Thyroid gland (tissue), 4 donors: ENCODE measurements at regions of chr6 and their contacts with region 1.

Region 1: DNA sequence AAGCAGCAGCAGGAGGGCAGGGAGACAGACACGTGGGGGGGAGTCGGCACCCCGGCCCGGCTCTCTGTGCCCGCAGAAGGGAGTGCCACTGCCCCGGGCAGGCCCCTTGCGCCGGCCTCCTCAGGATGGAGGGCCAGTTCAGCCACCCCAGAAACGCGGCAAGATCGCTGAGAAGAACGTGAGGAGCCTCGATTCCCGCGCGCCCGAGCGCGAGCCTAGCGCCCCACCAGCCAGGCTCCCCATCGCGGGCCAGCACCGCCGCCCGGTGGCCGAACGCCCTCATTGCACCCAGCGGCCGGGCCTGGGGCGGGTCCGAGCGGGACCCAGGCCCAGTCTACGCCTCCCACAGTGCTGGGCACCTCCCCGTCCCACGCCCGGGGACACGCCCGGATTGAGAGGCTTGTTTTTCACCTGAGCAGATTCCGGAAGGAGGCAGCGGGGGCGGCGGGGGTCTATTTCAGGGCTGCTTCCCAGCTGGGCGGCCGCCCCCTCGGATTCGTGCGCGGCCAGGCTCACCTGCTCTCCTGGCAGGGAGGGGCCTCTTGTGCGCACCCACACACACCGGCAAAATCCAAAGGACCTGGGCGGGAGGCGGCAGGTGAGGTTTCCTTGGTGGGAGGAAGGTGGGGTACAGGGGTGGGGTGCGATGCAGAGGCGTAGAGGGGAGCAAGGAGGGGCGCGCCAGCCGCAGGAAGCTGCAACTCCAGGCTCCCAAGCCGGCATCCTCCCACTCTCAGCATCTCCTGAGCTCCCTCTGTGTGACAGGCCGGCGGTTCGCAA is 9.0 kb upstream of the GRM4 start:
- DNase-seq: peak; percentile 49 to 53
- H3K4me3 ChIP-seq: no peak overlapping the region
- H3K27ac ChIP-seq: no peak overlapping the region
- H3K4me1 ChIP-seq: peaks cover 0 to 8% of the 10 kb centered on the region in 2 donors
- H3K27me3 ChIP-seq: peaks cover 5% of the 10 kb centered on the region
- CTCF ChIP-seq: peak; percentile 81 to 99 (median 97)
- POLR2A ChIP-seq: no peak

Region 2: DNA sequence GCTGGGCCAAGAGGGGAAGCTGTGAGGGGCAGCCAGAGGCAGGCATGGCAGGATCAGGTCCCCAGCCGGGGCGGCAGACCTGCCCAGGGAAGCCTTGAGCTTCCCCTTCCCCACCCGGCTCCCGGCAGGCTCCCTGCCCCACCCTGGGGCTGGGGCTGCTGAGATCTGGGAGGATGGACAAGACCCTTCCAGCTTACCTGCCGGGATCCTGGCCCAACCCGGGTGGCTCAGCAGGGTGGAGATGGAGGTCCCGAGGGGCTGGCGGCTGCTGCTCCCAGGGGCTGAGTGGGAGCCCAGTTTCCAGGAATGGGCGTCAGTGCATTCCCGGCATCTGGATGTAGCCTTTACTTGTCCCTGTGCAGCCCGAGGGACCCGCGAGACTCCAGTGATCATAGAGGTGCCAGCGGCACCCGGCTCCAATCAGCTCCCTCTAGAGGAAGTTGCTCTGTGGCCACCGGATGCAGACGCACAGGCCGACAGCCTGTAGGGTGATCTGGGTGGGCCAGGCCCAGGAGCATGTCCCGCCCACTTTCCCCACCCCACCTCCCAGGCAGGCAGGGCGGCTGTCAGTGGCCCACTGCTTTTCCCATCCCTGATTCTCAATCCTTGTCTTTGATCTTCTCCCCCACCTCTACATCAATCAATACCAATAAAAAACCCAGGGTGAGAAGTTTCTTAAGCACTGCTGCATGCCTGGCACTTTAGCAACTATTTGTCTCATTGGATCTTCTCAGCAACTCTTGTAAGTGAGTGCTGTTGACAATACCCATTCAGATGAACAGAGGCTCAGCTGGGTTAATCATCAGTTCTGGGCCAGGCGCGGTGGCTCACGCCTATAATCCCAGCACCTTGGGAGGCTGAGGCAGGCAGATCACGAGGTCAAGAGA is 574.8 kb before region 1 on chr6 and contains the start of gene BAK1:
- intact Hi-C with region 1: loop called (anchors 10 kb)
- DNase-seq: peak; percentile 94
- H3K4me3 ChIP-seq: peak within 1 kb of the TSS; percentile 51 to 68 (median 61)
- H3K27ac ChIP-seq: peak within 1 kb of the TSS; percentile 34 to 81 (median 74)
- H3K4me1 ChIP-seq: peaks cover 9 to 18% of the 10 kb centered on the region in 2 donors
- H3K27me3 ChIP-seq: no peaks in the 10 kb centered on the region
- CTCF ChIP-seq: peak in 5 of 6 experiments; percentile 15 to 48 (median 41)
- POLR2A ChIP-seq: peak in 1 of 2 donors; percentile 83
- total RNA-seq, gene BAK1: 2.3 to 8.5 (median 4.6) TPM

Region 3: DNA sequence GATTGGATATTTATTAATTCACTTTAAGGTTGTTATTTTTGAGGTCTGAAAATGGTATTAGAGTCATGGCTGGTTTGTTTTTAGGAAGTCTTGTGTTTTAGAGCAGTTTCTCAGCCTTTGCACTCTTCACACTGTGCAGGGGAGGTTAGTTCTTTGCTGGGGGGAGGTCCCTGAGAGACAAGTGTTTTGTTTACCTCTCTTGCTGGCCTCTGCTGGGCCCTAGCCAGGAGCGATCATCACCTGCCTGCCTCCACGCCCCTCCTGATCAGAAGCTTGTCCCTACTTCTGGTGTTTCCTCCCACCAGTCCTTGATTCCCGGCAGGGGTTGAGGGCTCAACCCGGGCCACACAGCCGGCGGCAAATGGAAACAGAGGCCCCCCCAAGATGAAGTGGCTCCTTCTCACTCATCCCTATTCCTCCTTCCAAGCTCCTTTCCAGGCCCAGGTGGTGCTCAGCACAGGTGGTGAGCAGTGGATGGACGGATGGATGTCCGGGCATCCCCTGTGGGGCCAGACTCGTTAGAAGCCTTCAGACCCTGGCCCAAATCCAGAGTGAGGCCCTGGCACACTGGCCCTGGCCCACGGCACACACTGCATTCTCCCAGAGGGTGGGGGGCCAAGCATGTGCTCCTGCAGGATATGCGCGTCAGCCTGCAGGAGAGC is 60.3 kb before region 1 on chr6:
- intact Hi-C with region 1: no loop called
- DNase-seq: peak; percentile 86 to 88
- H3K4me3 ChIP-seq: no peak overlapping the region
- H3K27ac ChIP-seq: peak overlapping the region; percentile 69 to 87 (median 83)
- H3K4me1 ChIP-seq: peaks cover 13 to 31% of the 10 kb centered on the region in 2 donors
- H3K27me3 ChIP-seq: no peaks in the 10 kb centered on the region
- CTCF ChIP-seq: no peak
- POLR2A ChIP-seq: no peak